Mammary epithelial cell (primary cell): ENCODE measurements at regions of chr7 and their contacts with region 1.

Region 1: DNA sequence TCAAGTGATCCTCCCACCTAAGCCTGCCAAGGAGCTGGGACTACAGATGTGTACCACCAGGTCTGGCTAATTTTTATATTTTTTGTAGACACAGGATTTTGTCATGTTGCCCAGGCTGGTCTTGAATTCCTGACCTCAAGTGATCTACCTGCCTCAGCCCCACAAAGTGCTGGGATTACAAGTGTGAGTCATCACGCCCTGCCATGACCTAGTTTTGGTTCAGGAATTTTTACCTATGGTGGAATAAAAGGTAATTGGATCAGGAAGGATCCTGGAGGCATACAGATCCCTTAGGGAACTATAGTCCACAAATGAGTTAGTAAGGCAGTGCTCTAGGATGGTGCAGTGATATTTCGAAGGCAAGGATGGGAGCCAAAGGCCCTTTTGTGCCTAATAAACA is 717.9 kb downstream of the PHTF2 start:
- DNase-seq: no peak
- H3K4me3 ChIP-seq: no peak overlapping the region
- H3K27ac ChIP-seq: no peak overlapping the region
- H3K4me1 ChIP-seq: no peaks in the 10 kb centered on the region
- H3K27me3 ChIP-seq: no peaks in the 10 kb centered on the region
- CTCF ChIP-seq: no peak

Region 2: DNA sequence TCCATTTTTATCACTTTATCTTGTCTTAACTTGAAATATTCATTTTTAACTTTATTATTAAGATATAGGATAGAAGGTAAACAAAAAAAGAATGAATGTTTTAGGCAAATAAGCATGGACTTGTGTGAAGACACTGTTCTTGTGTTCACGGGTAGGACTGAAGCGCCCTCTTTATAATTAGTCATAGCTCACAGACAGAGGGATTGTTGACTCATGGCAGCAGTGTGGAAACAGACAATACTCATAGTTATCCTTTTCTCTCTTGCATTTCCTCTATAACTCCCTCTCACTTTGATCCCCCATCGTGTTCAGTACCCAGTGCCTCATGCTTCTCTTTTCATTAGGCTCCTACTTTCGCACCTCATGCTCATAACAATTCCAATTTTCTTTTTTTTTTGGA is 13.9 kb after region 1 on chr7:
- CTCF ChIA-PET with region 1: no interaction called
- dilution Hi-C with region 1: no loop called
- in situ Hi-C with region 1: no loop called
- intact Hi-C with region 1: loop called (anchors 1 kb)
- DNase-seq: peak; percentile 40
- H3K4me3 ChIP-seq: no peak overlapping the region
- H3K27ac ChIP-seq: no peak overlapping the region
- H3K4me1 ChIP-seq: no peaks in the 10 kb centered on the region
- H3K27me3 ChIP-seq: no peaks in the 10 kb centered on the region
- CTCF ChIP-seq: no peak

Region 3: DNA sequence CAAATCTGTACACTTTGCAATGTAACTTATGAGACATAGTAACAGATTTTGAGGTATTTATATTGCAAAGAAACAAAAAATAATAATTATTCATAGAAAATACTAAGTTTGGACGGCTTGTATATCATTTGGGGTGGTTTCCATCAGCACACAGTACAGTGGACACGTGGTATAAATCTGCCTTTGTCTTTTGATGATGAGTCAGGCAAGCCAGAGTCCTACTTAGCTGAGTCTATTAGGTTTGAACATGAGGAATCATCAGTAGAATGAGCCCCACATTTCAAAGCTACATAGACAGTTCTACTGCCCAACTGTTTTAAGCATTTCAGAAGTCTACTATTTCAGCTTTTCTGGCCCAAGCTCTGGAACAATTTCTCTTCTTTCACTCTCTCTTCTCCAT is 85.3 kb after region 1 on chr7:
- CTCF ChIA-PET with region 1: no interaction called
- dilution Hi-C with region 1: no loop called
- in situ Hi-C with region 1: no loop called
- intact Hi-C with region 1: no loop called
- DNase-seq: no peak
- H3K4me3 ChIP-seq: no peak overlapping the region
- H3K27ac ChIP-seq: no peak overlapping the region
- H3K4me1 ChIP-seq: no peaks in the 10 kb centered on the region
- H3K27me3 ChIP-seq: no peaks in the 10 kb centered on the region
- CTCF ChIP-seq: no peak